Activated naive CD4-positive, alpha-beta T cell treated with anti-CD3 and anti-CD28 coated beads, Interleukin-2, amount 10 ng/mL, durations not matched to agents 7 days and 5 days (primary cell): ENCODE measurements at regions of chr14 and their contacts with region 1.

Region 1: DNA sequence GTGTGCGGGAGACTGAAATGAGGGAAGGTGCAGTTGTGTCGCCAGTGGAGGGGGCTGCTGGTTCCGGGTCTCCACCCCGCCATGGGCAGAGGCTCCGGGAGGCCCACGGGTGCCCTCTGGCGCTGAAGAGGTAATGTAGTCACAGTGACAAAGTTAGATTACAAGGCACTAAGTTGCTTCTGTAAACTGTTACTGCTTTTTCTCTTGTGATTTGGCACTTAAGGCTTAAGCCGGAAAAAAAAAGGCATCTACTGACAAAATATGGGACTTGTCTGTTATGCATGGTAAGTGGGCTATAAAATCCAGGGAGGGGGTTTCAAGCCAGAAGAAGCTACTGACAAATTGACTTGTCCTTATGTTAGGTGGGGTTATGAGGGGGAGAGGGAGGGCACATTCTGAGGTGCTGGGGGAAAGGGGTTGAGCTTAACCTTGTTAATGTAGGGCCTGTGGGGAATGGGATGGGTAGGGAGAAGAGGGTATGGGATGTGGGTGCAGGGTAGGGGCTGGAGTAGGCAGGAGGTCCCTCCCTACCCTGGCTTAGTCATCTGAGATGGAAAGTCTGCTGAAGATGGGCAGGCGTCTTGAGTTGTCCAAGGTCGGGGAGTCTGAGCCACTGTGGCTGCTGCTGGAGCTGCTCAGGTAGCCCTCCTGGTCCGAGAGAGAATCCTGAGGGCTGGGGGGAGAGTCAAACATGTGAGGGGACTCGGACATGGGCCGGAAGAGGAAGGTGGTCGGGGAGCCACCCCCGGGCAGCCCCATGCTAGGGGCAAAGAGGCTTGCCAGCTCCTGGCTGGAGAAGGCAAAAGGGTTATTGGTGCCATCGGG is 3.7 kb downstream of the ZFP36L1 start:
- DNase-seq: peak; percentile 93
- H3K4me3 Mint-ChIP-seq: peak overlapping the region; percentile 95
- H3K27ac Mint-ChIP-seq: peak overlapping the region; percentile 100
- H3K4me1 Mint-ChIP-seq: peaks cover 57% of the 10 kb centered on the region
- H3K27me3 Mint-ChIP-seq: peaks cover 5% of the 10 kb centered on the region

Region 2: DNA sequence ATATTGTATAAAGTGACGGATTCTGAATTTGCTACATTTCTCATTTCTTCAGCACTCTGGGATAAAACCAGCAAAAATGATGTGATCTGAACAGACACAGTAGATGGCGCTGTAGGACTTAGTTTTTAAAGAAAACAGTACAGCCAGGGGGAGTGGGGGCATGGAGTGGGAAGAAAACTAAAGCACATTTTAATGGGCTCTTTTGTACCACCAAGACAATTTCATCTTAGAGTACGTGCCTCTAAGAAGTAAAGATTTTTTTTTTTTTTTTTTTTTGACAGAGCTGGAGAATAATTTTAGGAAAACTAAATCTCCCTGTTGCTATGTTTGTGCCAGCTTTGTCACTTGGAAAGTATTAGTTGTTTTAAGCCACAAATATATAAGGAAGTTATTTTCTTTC is 845.3 kb before region 1 on chr14:
- CTCF ChIA-PET with region 1: interaction called, 10 read pairs
- DNase-seq: peak; percentile 60
- H3K4me3 Mint-ChIP-seq: no peak overlapping the region
- H3K27ac Mint-ChIP-seq: no peak overlapping the region
- H3K4me1 Mint-ChIP-seq: no peaks in the 10 kb centered on the region
- H3K27me3 Mint-ChIP-seq: no peaks in the 10 kb centered on the region

Region 3: GRCh38 chr14:68718023-68718995 is 70.9 kb before region 1 on chr14:
- CTCF ChIA-PET with region 1: interaction called, 43 read pairs
- DNase-seq: peak; percentile 3
- H3K4me3 Mint-ChIP-seq: no peak overlapping the region
- H3K27ac Mint-ChIP-seq: no peak overlapping the region
- H3K4me1 Mint-ChIP-seq: peaks cover 26% of the 10 kb centered on the region
- H3K27me3 Mint-ChIP-seq: peaks cover 6% of the 10 kb centered on the region

Region 4: DNA sequence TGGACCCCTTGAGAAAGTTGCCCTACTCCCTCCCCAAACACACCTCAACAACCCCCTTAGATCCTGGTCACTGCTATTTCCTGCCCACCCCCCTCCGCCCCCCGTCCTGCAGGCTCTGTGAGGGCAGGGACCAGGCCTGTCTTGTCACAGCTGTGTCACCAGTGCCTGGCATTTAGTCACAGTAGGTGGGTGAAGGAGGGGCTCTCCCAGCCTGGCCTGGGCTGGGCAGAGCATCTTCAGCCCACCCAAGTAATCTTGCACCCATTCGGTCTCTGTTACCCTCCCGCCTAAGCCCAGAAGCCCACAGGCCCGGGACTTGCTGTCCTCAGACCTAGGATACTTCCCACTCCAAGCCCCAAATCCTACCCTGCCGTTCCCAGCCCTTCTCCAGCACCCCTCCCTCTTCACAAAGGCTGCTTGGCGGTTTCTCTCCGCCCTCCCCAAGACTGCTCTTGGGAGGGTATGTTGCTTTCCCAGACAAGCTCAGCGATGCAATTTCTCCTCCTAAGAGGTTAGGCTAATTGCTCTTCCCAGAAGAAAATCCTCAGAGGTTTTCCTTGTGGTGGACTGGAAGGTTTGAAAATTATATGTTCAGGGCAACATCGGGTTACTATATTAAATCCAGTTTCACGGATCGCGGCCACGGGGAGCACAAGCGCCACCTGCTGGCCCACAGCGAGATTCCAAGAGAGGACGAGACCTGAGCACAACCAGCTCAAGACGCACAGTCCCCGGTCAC is 54.4 kb after region 1 on chr14:
- CTCF ChIA-PET with region 1: interaction called, 17 read pairs
- DNase-seq: peak; percentile 83
- H3K4me3 Mint-ChIP-seq: no peak overlapping the region
- H3K27ac Mint-ChIP-seq: no peak overlapping the region
- H3K4me1 Mint-ChIP-seq: peaks cover 18% of the 10 kb centered on the region
- H3K27me3 Mint-ChIP-seq: peaks cover 16% of the 10 kb centered on the region

Region 5: GRCh38 chr14:69288011-69288771 is 499.0 kb after region 1 on chr14:
- CTCF ChIA-PET with region 1: no interaction called
- DNase-seq: peak; percentile 11
- H3K4me3 Mint-ChIP-seq: no peak overlapping the region
- H3K27ac Mint-ChIP-seq: no peak overlapping the region
- H3K4me1 Mint-ChIP-seq: no peaks in the 10 kb centered on the region
- H3K27me3 Mint-ChIP-seq: peaks cover 18% of the 10 kb centered on the region